ENCODE measurements at regions of chr7 and their contacts with region 1.

Region 1: GRCh38 chr7:37181550-37181932 is 267.1 kb downstream of the ELMO1 start:
- DNase-seq: no peak
- H3K4me3 ChIP-seq: no peak overlapping the region
- H3K27ac ChIP-seq: no peak overlapping the region
- H3K4me1 ChIP-seq: peaks cover 0 to 10% (median 0%) of the 10 kb centered on the region in 4 donors
- H3K27me3 ChIP-seq: no peaks in the 10 kb centered on the region
- CTCF ChIP-seq: no peak
- EP300 ChIP-seq: no peak
- POLR2A ChIP-seq: no peak

Region 2: DNA sequence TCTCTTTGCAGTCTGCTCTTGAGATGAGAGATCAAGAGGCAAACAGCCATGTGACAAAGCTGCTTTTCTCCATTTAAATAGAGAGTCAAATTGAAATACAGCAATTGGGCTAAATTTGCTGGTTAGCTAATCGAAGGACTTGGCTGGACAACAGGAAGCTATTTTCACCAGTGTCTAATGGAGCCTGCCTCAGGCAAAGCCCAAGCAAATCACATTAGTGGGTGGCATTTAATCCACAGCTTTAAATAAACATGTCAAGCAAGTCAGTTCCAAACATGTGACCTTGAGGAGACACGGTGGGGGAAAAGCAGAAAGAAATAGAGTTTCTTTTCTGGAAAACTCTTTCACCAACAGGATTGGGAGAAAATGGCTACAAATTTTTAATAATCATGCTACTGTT is 276.7 kb before region 1 on chr7:
- in situ Hi-C with region 1: no loop called
- intact Hi-C with region 1: no loop called
- DNase-seq: no peak
- H3K4me3 ChIP-seq: no peak overlapping the region
- H3K27ac ChIP-seq: no peak overlapping the region
- H3K4me1 ChIP-seq: no peaks in the 10 kb centered on the region
- H3K27me3 ChIP-seq: no peaks in the 10 kb centered on the region
- CTCF ChIP-seq: no peak
- EP300 ChIP-seq: no peak
- POLR2A ChIP-seq: no peak

Region 3: DNA sequence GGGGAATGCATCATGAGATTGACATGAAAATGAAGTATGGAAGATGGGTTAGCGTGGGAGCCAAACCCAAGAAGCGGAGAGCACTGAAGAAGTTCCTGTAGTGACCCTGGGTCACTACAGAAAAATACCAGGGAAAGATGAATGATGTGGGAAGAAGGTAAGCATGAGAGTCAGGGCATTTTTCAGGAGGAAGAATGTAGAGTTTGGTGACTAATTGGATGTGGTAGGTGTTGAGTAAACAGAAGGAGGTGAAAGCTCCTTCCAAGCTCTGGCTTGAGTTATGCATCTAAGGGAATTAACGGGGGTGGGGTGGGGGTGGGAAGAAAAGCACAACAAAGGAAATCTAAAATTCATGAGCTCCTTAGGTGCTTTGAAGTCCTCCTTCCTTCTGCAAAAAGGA is 219.2 kb before region 1 on chr7:
- in situ Hi-C with region 1: no loop called
- intact Hi-C with region 1: loop called (anchors 5 kb)
- DNase-seq: no peak
- H3K4me3 ChIP-seq: no peak overlapping the region
- H3K27ac ChIP-seq: no peak overlapping the region
- H3K4me1 ChIP-seq: peaks cover 0 to 20% (median 9%) of the 10 kb centered on the region in 4 donors
- H3K27me3 ChIP-seq: no peaks in the 10 kb centered on the region
- CTCF ChIP-seq: no peak
- EP300 ChIP-seq: no peak
- POLR2A ChIP-seq: no peak

Region 4: GRCh38 chr7:36986429-36987362 is 194.8 kb before region 1 on chr7:
- in situ Hi-C with region 1: loop called (anchors 5 to 10 kb)
- intact Hi-C with region 1: no loop called
- DNase-seq: peak; percentile 53
- H3K4me3 ChIP-seq: no peak overlapping the region
- H3K27ac ChIP-seq: no peak overlapping the region
- H3K4me1 ChIP-seq: peaks cover 0 to 9% (median 0%) of the 10 kb centered on the region in 4 donors
- H3K27me3 ChIP-seq: no peaks in the 10 kb centered on the region
- CTCF ChIP-seq: peak; percentile 74 to 77 (median 75)
- EP300 ChIP-seq: no peak
- POLR2A ChIP-seq: no peak

Region 5: DNA sequence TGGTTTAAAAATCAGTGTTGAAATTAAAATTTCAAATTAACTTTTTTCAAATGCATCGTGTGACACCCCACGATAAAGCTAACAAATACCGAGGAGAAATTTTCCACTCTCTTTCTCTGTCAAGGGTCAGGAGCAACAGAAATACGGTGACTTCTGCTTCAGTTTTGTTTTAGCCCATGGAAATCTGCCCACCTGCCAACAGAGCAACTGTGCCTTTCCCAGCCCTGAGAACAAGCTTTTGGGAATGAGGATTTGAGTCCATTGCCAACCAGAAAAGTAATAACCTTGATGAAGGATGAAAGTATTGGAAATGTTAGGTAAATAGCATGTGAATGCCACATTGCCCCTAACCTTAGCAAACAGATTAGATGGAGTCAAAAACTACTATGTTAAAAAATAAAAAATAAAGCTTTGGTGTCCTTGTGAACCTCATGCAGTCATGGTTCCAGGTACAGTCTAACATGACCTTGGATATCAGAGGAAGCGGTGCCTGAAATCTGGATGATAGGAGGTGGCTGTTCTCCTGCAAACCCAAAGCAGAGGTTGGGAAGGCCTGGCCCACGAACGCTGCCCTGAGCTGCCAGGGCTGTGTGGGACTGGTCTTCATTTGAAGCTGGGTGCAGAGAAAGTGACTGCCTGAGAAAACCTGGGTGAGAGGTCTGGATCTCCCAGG is 29.7 kb before region 1 on chr7:
- in situ Hi-C with region 1: no loop called
- intact Hi-C with region 1: loop called (anchors 1 kb)
- DNase-seq: no peak
- H3K4me3 ChIP-seq: no peak overlapping the region
- H3K27ac ChIP-seq: no peak overlapping the region
- H3K4me1 ChIP-seq: peaks cover 6 to 21% (median 11%) of the 10 kb centered on the region in 4 donors
- H3K27me3 ChIP-seq: no peaks in the 10 kb centered on the region
- CTCF ChIP-seq: no peak
- EP300 ChIP-seq: no peak
- POLR2A ChIP-seq: no peak

Region 6: GRCh38 chr7:37960483-37960882 is 778.9 kb after region 1 on chr7:
- in situ Hi-C with region 1: no loop called
- intact Hi-C with region 1: no loop called
- DNase-seq: no peak
- H3K4me3 ChIP-seq: no peak overlapping the region
- H3K27ac ChIP-seq: no peak overlapping the region
- H3K4me1 ChIP-seq: no peaks in the 10 kb centered on the region
- H3K27me3 ChIP-seq: no peaks in the 10 kb centered on the region
- CTCF ChIP-seq: no peak
- EP300 ChIP-seq: no peak
- POLR2A ChIP-seq: no peak

Measured in transverse colon (tissue), 4 donors.